Psoas muscle (tissue), 8 donors: ENCODE measurements at regions of chr1 and their contacts with region 1.

Region 1: DNA sequence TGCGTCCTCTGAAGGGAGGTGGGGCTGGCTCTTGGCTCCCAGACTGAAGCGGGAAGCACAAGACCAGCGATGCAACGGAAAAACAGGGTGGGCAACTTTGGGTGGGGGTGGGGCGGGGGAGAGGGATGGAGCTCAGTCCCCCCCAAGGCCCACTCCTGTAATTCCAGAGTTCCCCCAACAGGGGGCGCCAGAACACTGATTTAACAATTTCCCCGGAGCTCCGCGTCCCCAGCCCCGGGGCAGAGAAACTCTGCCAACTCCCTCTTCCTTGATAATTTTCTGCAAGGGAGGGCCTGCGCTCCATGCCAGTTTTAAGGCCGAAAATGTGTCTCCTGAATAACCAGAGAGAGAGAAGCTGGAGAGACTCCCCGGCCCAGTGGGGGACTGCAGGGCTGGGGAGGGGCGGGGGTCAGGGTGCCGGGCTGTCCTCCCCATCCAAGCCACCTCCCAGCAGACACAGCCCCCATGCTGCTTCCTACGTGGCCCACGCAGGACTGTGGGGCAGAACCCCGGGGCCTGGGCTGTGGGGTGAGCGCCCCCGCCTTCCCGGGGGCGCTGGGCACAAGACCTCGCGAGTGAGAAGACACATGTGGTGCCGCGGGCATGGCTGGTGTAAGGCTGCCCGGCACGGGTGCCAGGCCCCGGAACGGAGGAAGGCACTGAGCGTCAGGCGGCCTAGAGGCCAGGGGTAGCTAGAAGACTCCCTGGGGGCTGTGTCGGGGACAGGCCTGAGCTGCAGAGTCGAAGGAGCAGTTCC is 51.4 kb downstream of the KIF21B start:
- DNase-seq: peak; percentile 64 to 77
- ATAC-seq: peak; percentile 46 to 79 (median 58)
- H3K4me3 ChIP-seq: no peak overlapping the region
- H3K27ac ChIP-seq: no peak overlapping the region
- H3K4me1 ChIP-seq: no peaks in the 10 kb centered on the region
- H3K27me3 ChIP-seq: no peaks in the 10 kb centered on the region
- CTCF ChIP-seq: peak; percentile 98

Region 2: GRCh38 chr1:201008666-201009388 is 36.7 kb after region 1 on chr1:
- intact Hi-C with region 1: loop called in 1 of 2 experiments (anchors 1 kb)
- DNase-seq: peak in 1 of 2 donors; percentile 23
- ATAC-seq: no peak
- H3K4me3 ChIP-seq: no peak overlapping the region
- H3K27ac ChIP-seq: no peak overlapping the region
- H3K4me1 ChIP-seq: no peaks in the 10 kb centered on the region
- H3K27me3 ChIP-seq: peaks cover 0 to 4% (median 0%) of the 10 kb centered on the region in 3 donors
- CTCF ChIP-seq: no peak

Region 3: DNA sequence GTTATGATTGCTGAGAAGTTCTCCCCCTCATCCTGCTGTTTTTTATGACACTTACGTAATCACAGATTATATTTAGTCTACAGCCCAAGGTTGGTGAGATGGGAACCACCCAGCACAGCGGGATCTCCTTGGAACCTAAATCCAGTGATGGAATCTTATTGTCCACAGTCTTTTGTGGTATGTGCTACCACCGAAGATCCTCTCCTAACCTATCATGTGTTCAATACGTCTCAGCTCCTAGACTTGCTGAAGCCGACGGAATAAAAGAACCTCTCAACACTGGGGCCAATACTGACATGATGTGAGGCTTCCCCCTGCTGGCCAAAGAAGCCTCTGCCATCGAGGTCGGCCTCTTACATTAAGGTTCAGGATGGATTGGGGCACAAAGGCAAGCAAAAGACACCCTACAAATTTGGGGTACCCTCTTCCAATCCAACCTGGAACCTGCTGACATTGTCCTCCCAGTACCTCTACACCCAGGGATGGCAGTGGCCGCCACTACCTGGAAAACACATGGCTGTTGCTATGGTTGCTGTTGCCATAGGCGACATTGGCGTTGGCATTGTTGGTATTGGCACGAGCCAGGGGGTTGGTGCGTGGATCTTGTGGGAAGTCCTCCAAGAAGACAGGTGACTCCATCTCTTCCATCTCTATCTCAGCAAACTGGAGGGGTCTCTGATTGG is 70.8 kb after region 1 on chr1:
- intact Hi-C with region 1: loop called (anchors 1 to 2 kb)
- DNase-seq: peak; percentile 53 to 74
- ATAC-seq: peak; percentile 61 to 86 (median 70)
- H3K4me3 ChIP-seq: no peak overlapping the region
- H3K27ac ChIP-seq: no peak overlapping the region
- H3K4me1 ChIP-seq: peaks cover 6% of the 10 kb centered on the region
- H3K27me3 ChIP-seq: no peaks in the 10 kb centered on the region
- CTCF ChIP-seq: peak; percentile 83

Region 4: DNA sequence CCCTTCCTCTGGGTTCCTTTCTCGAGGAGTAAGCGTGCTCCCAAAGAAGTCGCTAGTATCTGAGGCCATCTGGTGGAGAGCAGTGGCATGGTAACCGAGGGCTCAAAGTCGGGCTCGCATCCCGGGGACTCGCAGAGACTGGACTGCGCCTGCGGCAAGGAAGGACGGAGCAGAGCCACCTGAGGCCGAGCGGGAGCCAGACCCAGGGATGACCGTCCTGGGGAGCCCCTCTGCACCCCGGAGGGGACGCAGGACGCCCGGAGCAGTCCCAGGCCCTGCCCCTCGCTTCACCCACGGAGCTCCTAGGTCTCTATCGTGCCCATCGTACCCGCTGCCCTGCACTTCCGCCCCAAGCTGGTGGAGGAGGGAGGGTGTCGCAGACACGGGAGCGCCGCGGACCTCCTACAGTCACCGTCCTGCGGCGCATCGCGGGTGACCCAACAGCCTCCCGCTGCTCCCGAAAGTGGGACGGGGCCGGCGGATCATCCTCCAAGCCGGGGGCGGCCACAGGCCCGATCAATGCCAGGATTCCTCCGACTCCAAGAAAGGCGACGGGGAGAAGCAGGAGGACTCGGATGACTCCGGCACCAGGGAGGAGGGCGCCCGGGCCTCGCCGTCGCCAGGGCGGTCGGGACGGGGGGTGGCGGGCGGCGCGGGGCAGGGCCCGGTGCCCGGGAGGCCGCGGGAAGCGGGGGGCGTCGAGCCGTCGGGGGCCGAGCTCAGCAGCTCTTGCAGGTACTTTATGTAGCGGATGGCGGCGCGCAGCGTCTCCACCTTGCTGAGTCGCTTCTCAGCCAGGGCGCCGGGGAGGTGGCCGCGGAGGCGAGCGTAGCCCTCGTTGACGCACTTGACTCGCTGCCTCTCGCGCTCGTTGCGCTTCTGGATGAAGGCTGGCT is 142.4 kb after region 1 on chr1:
- intact Hi-C with region 1: loop called (anchors 2 to 5 kb)
- DNase-seq: peak; percentile 89 to 90
- ATAC-seq: peak; percentile 84 to 89 (median 88)
- H3K4me3 ChIP-seq: peak overlapping the region; percentile 78
- H3K27ac ChIP-seq: peak overlapping the region; percentile 95
- H3K4me1 ChIP-seq: peaks cover 19% of the 10 kb centered on the region
- H3K27me3 ChIP-seq: no peaks in the 10 kb centered on the region
- CTCF ChIP-seq: peak; percentile 85

Region 5: DNA sequence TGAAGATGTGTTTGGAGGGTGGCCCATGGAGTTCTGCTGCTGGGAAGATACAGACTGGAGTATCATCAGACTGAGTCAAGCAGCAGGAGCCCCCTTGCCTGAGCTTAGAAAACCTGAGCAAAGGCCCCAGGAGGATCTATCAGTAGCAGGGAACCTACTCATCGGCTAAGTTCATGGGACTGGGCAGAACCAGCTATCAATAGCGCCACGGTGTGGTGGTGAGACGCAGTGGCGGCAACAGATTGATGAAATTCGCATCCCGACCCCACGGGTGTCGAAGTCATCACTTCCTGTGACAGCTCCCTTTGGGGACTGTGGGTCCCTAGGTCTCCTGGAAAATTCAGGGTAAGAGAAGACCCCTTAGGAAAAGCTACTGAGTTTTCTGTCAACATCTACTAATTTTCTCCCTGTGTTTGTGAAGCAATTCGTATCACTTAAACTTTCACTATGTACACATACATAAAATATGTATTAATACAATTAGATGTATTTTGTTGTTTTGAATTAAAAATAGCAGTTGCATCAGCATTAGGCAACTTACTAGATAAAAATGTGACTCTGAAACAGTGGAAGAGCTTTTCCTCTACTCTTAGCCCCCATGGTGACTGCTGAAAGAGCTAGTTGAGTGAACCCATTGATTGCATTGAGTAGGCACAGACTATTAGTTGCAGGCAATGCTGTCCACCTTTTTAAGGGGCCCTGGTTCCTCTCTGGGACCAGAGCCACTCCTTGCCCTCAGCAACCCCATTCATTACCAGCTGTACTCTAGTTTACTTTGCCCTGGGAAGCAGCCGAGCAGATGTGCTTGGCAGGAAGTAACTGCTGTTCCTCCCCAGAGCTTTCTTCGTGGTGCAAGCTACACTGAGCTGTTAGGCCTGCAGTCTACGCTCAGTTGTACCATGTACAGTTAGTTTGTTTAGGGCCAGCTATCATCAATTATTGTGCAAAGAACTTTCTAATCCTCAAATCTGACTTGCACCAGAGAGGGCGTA is 147.4 kb after region 1 on chr1:
- intact Hi-C with region 1: loop called (anchors 2 to 5 kb)
- DNase-seq: peak in 1 of 2 donors; percentile 73
- ATAC-seq: peak; percentile 56 to 71 (median 66)
- H3K4me3 ChIP-seq: no peak overlapping the region
- H3K27ac ChIP-seq: no peak overlapping the region
- H3K4me1 ChIP-seq: no peaks in the 10 kb centered on the region
- H3K27me3 ChIP-seq: no peaks in the 10 kb centered on the region
- CTCF ChIP-seq: peak; percentile 69

Region 6: DNA sequence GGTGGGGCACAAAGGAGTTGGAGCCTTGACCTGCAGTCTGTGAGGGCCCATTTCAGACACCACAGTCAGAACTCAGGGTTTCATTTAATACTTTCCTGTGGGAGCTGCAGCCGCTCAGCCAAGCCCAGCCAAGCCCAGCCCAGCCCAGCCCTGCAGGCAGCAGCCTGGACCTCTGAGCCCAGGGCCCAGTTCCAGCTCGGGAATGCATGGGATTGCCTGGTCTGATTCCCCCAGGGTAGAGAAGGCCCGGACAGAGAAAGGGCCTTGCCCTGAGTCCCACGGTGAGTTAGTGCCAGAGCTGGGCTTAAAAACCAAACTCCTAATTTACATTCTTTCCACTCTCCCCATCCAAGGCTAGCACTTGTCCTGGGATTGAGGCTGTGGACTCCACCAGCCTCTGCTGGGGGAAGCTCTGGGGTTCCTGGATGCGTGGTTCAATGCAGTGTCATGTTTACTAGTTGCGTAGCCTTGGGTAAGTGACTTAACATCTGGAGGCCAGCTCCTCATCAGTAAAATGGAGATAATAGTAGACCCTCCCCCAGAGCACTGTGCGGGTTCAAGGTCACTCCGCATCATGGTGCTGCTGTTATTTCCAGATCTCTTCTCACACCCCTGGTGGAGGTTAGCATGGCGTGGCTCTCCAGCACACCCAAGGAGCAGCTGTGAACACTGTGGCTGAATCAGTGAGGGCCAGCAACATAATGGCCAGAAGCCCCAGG is 281.9 kb after region 1 on chr1:
- intact Hi-C with region 1: no loop called
- DNase-seq: no peak
- ATAC-seq: peak; percentile 9 to 27 (median 14)
- H3K4me3 ChIP-seq: no peak overlapping the region
- H3K27ac ChIP-seq: no peak overlapping the region
- H3K4me1 ChIP-seq: no peaks in the 10 kb centered on the region
- H3K27me3 ChIP-seq: no peaks in the 10 kb centered on the region
- CTCF ChIP-seq: no peak